Activated naive CD4-positive, alpha-beta T cell treated with anti-CD3 and anti-CD28 coated beads, Interleukin-2, amount 10 ng/mL, durations not matched to agents 7 days and 5 days (primary cell): ENCODE measurements at regions of chr15 and their contacts with region 1.

Region 1: DNA sequence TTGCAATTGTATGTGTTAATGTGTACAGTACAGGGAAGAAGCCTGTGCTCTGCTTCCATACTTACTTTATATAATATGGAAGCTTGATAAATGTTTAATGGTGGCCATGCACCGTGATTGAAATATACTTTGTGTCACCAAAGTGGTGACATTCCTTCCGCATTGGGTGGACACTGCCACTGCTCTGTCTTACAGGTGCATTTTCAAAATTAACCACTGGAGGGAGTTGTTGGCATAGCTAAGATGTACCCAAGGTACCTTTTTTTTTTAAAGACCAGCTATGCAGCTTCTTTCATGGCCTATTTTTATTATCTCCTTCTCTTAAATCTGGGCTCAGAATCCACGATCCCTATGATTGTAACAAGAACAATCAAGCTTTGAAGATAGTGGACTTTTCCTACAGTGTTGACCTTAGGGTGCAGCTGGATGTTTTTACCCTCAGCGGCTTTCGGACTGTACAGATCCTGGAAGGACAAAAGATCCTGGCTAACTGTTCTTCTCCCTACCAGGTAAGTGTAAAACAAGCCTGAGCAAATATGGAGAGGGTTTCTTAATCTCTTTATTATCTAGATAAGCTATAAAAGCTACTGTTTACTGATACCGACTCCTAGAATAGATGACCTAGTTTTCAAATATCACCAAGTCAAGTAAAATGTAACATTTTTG is 21.6 kb upstream of the PAK6 start:
- DNase-seq: peak; percentile 54
- H3K4me3 Mint-ChIP-seq: no peak overlapping the region
- H3K27ac Mint-ChIP-seq: no peak overlapping the region
- H3K4me1 Mint-ChIP-seq: no peaks in the 10 kb centered on the region
- H3K27me3 Mint-ChIP-seq: no peaks in the 10 kb centered on the region

Region 2: GRCh38 chr15:40044717-40045571 is 172.3 kb before region 1 on chr15:
- CTCF ChIA-PET with region 1: interaction called, 28 read pairs
- DNase-seq: peak; percentile 89
- H3K4me3 Mint-ChIP-seq: peak overlapping the region; percentile 19
- H3K27ac Mint-ChIP-seq: peak overlapping the region; percentile 74
- H3K4me1 Mint-ChIP-seq: peaks cover 84% of the 10 kb centered on the region
- H3K27me3 Mint-ChIP-seq: no peaks in the 10 kb centered on the region

Region 3: GRCh38 chr15:40081691-40082194 is 135.5 kb before region 1 on chr15:
- CTCF ChIA-PET with region 1: no interaction called
- DNase-seq: peak; percentile 30
- H3K4me3 Mint-ChIP-seq: peak overlapping the region; percentile 22
- H3K27ac Mint-ChIP-seq: no peak overlapping the region
- H3K4me1 Mint-ChIP-seq: peaks cover 36% of the 10 kb centered on the region
- H3K27me3 Mint-ChIP-seq: peaks cover 62% of the 10 kb centered on the region

Region 4: DNA sequence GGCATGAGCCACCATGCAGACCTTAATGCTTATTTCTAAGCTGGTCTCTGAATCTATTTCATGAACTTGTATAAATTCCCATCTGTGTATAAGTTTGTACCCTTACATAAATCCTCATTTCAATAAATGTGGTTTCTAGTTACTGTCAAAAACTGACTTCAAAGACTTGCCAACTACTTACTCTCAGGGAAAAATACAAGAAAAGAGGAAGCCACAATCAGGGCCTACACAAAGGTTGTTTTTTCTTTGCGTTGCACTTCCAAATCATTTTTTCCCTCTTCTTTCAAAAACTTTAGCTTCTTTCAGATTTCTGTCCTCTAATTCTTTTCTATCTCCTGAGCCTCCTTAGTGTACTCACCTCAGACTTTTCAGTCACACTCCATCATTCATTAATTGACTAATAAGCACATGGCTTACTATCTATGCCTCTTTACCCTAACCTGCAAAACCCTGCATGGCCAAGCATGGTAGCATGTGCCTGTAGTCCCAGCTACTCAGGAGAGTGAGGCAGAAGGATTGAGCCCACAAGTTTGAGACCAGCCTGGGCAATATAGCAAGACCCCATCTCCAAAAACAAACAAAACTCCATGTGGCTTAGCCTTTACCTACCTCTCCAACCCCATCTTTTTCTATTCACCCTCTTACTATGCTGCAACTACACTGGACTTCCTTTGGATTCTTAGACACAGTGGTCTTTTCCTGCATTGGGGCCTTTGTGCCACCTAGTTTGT is 18.8 kb before region 1 on chr15:
- CTCF ChIA-PET with region 1: interaction called, 12 read pairs
- DNase-seq: no peak
- H3K4me3 Mint-ChIP-seq: no peak overlapping the region
- H3K27ac Mint-ChIP-seq: peak overlapping the region; percentile 38
- H3K4me1 Mint-ChIP-seq: peaks cover 39% of the 10 kb centered on the region
- H3K27me3 Mint-ChIP-seq: no peaks in the 10 kb centered on the region

Region 5: GRCh38 chr15:40307421-40308211 is 90.3 kb after region 1 on chr15 and contains the start of gene PLCB2:
- CTCF ChIA-PET with region 1: interaction called, 16 read pairs
- DNase-seq: peak; percentile 83
- H3K4me3 Mint-ChIP-seq: peak within 1 kb of the TSS; percentile 94
- H3K27ac Mint-ChIP-seq: peak within 1 kb of the TSS; percentile 98
- H3K4me1 Mint-ChIP-seq: peaks cover 40% of the 10 kb centered on the region
- H3K27me3 Mint-ChIP-seq: peaks cover 23% of the 10 kb centered on the region

Region 6: DNA sequence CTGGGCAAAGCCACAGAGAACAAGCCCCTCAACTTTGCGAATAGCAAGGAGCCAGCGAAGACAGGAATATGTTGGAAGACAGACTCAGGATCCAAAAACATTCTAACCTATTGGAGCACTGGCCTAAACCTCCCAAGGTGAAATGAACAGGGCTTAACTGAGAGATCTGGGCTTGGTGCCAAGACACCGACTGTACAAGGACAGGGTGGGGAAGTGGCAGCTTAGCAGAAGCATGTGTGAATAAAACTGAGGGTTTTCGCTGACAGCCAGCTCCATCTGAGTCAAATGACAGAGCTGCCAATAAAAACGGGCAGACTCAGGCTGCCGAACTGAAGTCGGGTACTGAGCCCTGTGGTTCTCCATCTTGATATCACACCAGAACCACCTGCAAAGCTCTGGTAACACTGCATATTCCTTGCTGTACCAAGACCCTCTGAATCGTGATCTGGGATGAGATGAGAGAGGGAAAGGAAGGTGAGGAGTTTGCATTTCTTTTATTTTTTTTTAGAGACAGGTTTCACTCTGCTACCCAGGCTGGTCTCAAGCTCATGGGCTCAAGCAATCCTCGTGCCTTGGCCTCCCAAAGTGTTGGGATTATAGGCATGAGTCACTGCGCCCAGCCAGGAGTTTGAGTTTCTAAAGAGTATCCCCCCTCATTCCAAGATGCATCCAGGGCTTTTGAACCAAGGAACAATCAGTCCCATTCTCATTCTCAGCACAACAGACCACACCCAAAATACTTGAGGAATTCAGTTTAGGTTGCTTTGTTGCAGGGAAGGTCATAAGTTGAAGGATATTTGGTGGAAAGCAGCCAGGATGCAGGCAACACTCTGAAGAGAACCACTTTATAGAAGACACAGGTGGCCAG is 96.5 kb after region 1 on chr15:
- CTCF ChIA-PET with region 1: interaction called, 16 read pairs
- DNase-seq: no peak
- H3K4me3 Mint-ChIP-seq: no peak overlapping the region
- H3K27ac Mint-ChIP-seq: no peak overlapping the region
- H3K4me1 Mint-ChIP-seq: peaks cover 14% of the 10 kb centered on the region
- H3K27me3 Mint-ChIP-seq: peaks cover 75% of the 10 kb centered on the region

Region 7: GRCh38 chr15:40731034-40731433 is 513.7 kb after region 1 on chr15:
- CTCF ChIA-PET with region 1: no interaction called
- DNase-seq: no peak
- H3K4me3 Mint-ChIP-seq: no peak overlapping the region
- H3K27ac Mint-ChIP-seq: peak overlapping the region; percentile 33
- H3K4me1 Mint-ChIP-seq: no peaks in the 10 kb centered on the region
- H3K27me3 Mint-ChIP-seq: no peaks in the 10 kb centered on the region